Adrenal gland (tissue), 19 donors: ENCODE measurements at regions of chr15 and their contacts with region 1.

Region 1: GRCh38 chr15:51192521-51193280 is 98.0 kb upstream of the TNFAIP8L3 start:
- DNase-seq: peak; percentile 86 to 97 (median 93)
- H3K4me3 ChIP-seq: no peak overlapping the region
- H3K27ac ChIP-seq: no peak overlapping the region
- H3K4me1 ChIP-seq: peaks cover 0 to 23% of the 10 kb centered on the region in 2 donors
- H3K27me3 ChIP-seq: peaks cover 10% of the 10 kb centered on the region
- CTCF ChIP-seq: peak; percentile 87 to 96 (median 92)
- POLR2A ChIP-seq: no peak

Region 2: DNA sequence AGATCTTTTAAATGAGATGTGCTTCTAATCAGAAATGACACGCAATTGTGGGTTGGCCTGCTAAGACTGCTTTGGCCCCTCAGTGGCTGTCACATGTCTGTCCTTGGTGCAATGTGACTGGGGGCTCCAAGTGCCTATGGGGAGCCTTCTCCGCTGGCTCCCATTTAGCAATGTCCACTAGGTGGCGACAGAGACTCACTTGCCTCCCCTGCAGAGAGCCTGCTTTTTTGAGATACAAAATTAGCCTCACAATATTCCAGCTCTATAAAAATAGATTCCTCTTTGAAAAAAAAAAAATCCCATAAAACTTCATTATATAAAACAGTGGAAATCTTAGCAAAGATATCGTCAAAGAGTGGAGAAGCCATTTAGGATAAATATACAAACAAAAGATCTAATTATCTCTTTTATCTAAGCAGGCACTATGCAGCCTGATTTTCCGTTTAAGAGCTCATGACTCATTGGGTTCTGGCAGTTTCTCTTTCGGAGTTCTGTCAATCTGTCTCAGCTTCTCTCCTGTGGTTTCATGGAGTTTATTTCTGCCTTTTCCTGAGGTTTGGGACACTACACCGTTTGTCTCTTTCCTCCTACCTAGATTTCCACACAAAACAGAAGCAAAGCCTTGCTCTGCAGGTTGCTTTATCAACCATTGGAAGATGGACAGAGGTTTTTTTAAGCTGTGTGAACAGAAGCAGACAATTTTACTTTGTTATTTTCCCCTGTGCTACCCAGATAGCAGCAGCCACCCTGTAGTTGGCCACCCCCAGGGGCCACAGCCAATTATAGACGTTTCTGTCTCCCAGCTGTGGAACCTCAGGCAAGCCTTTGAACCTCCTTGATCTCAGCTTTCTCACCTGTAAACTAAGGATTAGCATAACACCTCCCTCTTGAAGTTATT is 29.6 kb before region 1 on chr15:
- intact Hi-C with region 1: loop called in 1 of 2 experiments (anchors 2 kb)
- DNase-seq: peak; percentile 69 to 88 (median 77)
- H3K4me3 ChIP-seq: peak overlapping the region in 1 of 4 donors; percentile 45
- H3K27ac ChIP-seq: peak overlapping the region in 1 of 5 donors; percentile 66
- H3K4me1 ChIP-seq: peaks cover 4 to 8% of the 10 kb centered on the region in 2 donors
- H3K27me3 ChIP-seq: no peaks in the 10 kb centered on the region
- CTCF ChIP-seq: peak; percentile 85 to 99 (median 92)
- POLR2A ChIP-seq: no peak